Cardiac septum (tissue), 1 donor: ENCODE measurements at regions of chr2 and their contacts with region 1.

Region 1: DNA sequence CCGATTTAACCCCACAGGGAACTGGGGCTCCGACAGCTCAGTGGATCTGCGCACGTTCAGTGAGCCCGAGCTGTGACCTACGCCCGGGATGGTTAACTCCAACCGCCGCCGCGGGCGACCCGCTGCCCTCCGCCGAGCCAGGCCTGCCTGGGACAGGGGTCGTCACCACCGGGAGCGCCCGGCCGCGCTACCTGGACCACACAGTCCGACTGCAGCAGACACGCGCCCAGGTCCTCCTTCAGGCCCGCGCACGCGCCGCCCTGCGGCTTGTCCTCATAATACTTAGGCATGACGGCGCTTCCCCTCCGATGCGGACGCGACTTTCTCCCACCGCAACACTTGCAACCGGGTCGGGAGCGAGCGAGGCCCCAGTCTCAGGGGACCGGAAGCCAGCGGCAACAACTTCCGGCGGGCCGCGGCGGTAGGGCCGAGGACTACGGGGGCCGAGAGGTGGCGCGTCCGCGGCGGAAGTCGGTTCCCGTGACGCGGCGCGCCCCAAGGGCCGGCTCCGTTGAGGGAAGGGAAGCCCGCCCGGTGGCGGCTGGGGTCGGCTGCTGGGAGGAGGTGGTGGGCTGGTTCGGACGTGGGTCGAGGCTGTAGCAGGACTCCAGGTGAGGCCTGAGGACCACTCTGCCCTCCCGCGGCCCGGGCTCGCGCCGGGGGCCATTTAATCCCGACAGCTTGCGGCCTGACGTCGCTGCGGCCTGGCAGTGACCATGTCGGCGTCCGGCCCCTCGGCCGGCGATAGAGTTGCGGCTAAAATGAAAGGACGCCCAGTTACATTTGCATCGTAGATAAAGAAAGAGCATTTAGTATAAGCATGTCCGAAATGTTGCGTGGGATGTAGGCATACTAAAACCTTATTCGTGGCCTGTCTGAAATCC is at the starts of genes COA5 and UNC50:
- DNase-seq: peak; percentile 95
- total RNA-seq, gene COA5: 28.3 TPM
- total RNA-seq, gene UNC50: 27.9 TPM

Region 2: DNA sequence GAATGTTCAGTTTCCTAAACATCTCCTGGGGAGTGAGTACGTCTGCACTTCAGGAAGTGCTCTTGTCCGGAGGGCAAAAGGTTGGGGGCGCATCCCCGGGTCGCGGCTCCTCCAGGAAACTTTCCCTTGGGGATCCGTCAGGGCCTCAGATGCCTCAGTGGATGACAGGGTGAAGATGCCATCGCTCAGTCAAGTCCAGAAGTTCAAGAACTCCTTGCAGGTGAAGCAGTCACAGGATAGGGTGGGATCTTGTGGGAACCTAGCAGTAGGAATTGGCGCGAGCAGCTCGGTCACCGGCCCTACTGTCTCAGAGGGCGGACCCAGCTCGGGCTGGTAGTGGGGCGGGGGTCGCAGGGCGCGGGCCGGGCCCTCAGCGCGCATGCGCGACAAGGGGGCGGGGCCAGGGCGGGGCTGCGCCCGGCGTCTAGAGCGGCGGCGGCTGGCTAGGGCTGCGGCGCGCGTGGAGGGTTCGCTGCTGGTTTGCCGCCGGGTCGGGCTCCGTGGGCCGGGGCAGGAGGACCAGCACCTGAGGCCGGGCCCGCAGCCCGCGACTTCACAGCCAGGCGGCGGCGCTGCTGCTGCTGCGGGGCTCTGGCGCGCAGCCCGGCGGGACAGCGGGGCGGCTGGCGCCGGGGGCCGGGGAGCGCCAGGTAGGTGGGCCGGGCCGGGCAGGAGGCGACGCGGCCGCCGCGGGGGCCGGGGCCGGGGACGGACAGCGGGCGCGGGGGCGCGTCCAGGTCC is 163.8 kb before region 1 on chr2 and contains the start of gene INPP4A:
- intact Hi-C with region 1: loop called (anchors 10 kb)
- DNase-seq: peak; percentile 89
- total RNA-seq, gene INPP4A: 19.9 TPM